CD8-positive, alpha-beta T cell (primary cell): ENCODE measurements at regions of chr6 and their contacts with region 1.

Region 1: GRCh38 chr6:42423244-42423643 is 28.5 kb downstream of the TRERF1 start:
- DNase-seq: peak in 5 of 9 experiments; percentile 15 to 59 (median 43)
- ATAC-seq: peak; percentile 53
- H3K4me3 ChIP-seq: no peak overlapping the region
- H3K4me3 Mint-ChIP-seq: peak overlapping the region; percentile 81
- H3K27ac ChIP-seq: peak overlapping the region in 1 of 2 experiments; percentile 5
- H3K27ac Mint-ChIP-seq: peak overlapping the region; percentile 86
- H3K4me1 ChIP-seq: peaks cover 30% of the 10 kb centered on the region
- H3K4me1 Mint-ChIP-seq: peaks cover 67% of the 10 kb centered on the region
- H3K27me3 ChIP-seq: no peaks in the 10 kb centered on the region
- H3K27me3 Mint-ChIP-seq: no peaks in the 10 kb centered on the region
- CTCF ChIP-seq: no peak

Region 2: GRCh38 chr6:41836022-41836659 is 587.1 kb before region 1 on chr6:
- CTCF ChIA-PET with region 1: no interaction called
- POLR2A ChIA-PET with region 1: no interaction called
- intact Hi-C with region 1: no loop called
- DNase-seq: peak in 1 of 9 experiments; percentile 12
- ATAC-seq: no peak
- H3K4me3 ChIP-seq: no peak overlapping the region
- H3K4me3 Mint-ChIP-seq: no peak overlapping the region
- H3K27ac ChIP-seq: no peak overlapping the region
- H3K27ac Mint-ChIP-seq: no peak overlapping the region
- H3K4me1 ChIP-seq: no peaks in the 10 kb centered on the region
- H3K4me1 Mint-ChIP-seq: peaks cover 6% of the 10 kb centered on the region
- H3K27me3 ChIP-seq: no peaks in the 10 kb centered on the region
- H3K27me3 Mint-ChIP-seq: no peaks in the 10 kb centered on the region
- CTCF ChIP-seq: no peak

Region 3: GRCh38 chr6:42374018-42374659 is 49.1 kb before region 1 on chr6:
- CTCF ChIA-PET with region 1: no interaction called
- POLR2A ChIA-PET with region 1: interaction called, 6 read pairs
- intact Hi-C with region 1: loop called in 1 of 2 experiments (anchors 5 kb)
- DNase-seq: peak in 4 of 9 experiments; percentile 25 to 61 (median 45)
- ATAC-seq: peak; percentile 68
- H3K4me3 ChIP-seq: no peak overlapping the region
- H3K4me3 Mint-ChIP-seq: peak overlapping the region; percentile 53
- H3K27ac ChIP-seq: peak overlapping the region in 1 of 2 experiments; percentile 57
- H3K27ac Mint-ChIP-seq: peak overlapping the region; percentile 93
- H3K4me1 ChIP-seq: peaks cover 64% of the 10 kb centered on the region
- H3K4me1 Mint-ChIP-seq: peaks cover 73% of the 10 kb centered on the region
- H3K27me3 ChIP-seq: no peaks in the 10 kb centered on the region
- H3K27me3 Mint-ChIP-seq: no peaks in the 10 kb centered on the region
- CTCF ChIP-seq: no peak